ENCODE measurements at regions of chrX and their contacts with region 1.

Region 1: DNA sequence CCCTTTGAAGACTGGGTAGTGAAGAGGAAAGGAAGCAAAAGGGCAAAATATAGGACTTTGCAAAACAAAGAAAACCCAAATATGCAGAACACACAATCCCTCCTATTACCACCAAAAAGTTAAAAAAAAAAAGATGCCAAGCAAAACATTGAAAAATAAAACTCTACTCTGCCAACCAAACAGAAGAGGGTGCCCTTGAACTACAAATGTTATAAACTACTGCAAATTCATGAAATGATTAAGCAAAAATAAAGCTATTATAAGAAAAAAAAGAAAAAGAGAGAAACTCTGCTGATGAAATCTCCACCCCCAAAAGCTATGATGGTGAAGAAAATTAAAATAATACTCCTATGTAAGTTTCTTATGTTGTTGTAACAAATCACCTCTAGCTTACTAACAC is 168.5 kb upstream of the STK26 start:
- DNase-seq: no peak
- H3K4me3 Mint-ChIP-seq: no peak overlapping the region
- H3K27ac Mint-ChIP-seq: no peak overlapping the region
- H3K4me1 Mint-ChIP-seq: no peaks in the 10 kb centered on the region
- H3K27me3 Mint-ChIP-seq: no peaks in the 10 kb centered on the region

Region 2: DNA sequence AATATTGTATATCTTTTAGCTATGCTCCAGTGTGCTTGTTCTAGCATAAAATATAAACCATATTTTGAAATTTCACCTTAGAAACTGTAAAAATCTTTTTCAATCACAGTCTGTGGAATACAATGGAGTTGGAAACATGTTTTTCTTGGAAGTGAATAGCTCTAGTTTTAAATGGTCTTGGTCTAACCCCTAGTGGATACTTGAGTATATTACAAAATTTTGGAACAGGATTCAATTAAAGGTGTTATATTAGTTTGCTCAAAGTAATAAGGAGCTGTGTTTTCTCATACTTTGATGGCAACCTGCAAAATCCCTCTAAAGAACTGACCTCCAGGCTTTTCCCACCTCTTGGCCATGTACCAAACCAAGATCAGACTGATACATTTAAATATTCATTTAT is 216.7 kb after region 1 on chrX:
- intact Hi-C with region 1: loop called (anchors 5 kb)
- DNase-seq: no peak
- H3K4me3 Mint-ChIP-seq: no peak overlapping the region
- H3K27ac Mint-ChIP-seq: no peak overlapping the region
- H3K4me1 Mint-ChIP-seq: no peaks in the 10 kb centered on the region
- H3K27me3 Mint-ChIP-seq: no peaks in the 10 kb centered on the region

Region 3: DNA sequence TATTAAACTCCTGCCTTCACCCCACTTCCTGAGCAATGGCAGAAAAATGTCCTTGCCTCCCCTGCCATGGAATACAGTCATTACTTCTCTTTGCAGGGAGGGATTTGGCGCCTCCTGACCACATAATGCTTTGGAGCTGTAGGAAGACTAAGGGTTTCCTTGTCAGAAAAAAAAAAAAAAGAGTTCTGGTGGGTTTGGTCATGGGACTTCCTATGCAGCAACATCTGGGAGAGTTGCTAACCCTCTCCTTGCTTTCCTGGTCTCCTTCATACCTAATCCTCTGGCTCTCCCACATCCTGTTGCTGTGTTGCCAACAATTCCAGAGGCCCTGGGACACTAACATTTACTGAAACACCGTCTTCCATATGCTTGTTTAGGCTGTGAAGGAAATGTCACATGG is 709.4 kb after region 1 on chrX:
- intact Hi-C with region 1: no loop called
- DNase-seq: no peak
- H3K4me3 Mint-ChIP-seq: no peak overlapping the region
- H3K27ac Mint-ChIP-seq: no peak overlapping the region
- H3K4me1 Mint-ChIP-seq: no peaks in the 10 kb centered on the region
- H3K27me3 Mint-ChIP-seq: peaks cover 2% of the 10 kb centered on the region

Measured in activated T-helper 2 cell treated with anti-CD3 and anti-CD28 coated beads, Interferon-gamma antibody, Interleukin-2, Interleukin-4, amounts not matched to agents 10 μg/mL and 5 μg/mL and 100 μg/mL, durations not matched to agents 14 hours and 24 hours and 36 hours (primary cell).